ENCODE measurements at regions of chr14 and their contacts with region 1.

Region 1: DNA sequence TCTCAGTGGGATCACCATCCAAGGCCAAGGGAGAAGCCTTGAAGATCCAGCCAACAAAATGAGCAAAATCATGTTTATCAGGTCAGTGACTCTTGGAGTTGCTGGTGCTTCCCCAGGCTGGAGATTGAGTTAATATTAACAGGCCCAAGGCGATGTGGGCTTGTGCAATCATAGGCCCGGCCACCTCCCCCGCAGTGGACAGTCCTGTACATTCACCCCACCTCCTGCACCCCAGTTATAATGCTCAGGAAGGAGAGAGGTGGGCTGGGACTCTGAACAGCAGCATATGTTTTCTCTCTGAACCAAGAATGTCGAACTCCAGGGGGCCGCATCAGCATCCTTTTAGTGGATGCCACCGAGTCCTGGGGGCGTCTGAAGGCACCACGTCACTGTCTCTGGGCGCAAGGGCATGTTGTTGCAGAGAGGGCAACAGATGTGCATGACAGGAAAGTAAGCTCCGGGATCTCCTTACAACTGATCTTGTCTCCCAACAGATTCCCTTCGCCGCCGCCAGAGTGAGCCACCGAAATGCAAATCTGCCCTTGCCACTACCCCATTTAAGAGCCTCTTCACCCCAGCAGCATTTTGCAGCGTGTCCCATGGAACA is 32.2 kb upstream of the SERPINA6 start:
- DNase-seq: no peak
- H3K4me3 ChIP-seq: no peak overlapping the region
- CTCF ChIP-seq: peak; percentile 57

Region 2: GRCh38 chr14:94334841-94335240 is 20.5 kb before region 1 on chr14:
- CTCF ChIA-PET with region 1: no interaction called
- POLR2A ChIA-PET with region 1: no interaction called
- DNase-seq: no peak
- H3K4me3 ChIP-seq: no peak overlapping the region
- CTCF ChIP-seq: no peak

Region 3: DNA sequence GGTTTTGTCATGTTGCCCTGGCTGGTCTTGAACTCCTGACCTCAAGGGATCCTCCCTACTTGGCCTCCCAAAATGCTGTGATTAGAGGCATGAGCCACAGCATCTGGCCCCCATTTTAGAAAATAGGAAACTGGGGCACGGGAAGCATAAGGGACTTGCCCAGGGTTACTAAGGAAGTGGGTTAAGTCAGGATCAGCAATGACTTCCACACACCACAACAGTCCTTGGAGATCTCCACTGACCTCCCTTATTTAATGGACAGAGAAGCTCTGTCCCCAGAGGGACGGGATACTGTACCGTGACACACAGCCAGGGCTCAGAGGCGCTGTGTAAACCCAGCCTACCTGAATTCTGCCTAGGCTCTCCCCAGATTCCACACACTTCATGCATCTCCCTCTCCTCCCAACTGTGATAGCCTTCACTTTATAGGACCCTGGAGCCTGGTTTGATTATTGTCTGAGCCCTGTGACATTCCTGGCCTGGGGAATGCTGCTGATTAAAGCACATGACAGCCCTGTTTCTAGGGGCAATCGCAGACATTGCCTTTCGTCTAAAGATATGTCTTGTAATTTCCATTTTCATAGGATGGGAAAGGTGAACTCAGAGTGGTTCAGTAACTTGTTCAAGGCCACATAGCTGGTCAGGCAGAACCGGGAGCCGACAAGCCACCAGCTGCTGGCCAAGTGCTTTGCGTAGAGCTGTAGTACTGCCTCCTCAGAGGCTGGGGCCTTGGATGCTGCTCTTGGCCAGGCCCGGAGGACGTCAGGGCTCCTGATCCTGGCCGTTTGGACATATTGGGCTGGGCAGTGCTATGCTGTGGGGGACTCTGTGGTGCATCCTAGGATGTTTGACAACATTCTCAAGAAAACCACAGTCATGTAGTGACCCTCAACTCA is 12.3 kb after region 1 on chr14:
- CTCF ChIA-PET with region 1: interaction called, 18 read pairs
- POLR2A ChIA-PET with region 1: no interaction called
- DNase-seq: no peak
- H3K4me3 ChIP-seq: no peak overlapping the region
- CTCF ChIP-seq: no peak

Region 4: GRCh38 chr14:94412671-94413638 is 57.7 kb after region 1 on chr14:
- CTCF ChIA-PET with region 1: interaction called, 19 read pairs
- POLR2A ChIA-PET with region 1: no interaction called
- DNase-seq: no peak
- H3K4me3 ChIP-seq: no peak overlapping the region
- CTCF ChIP-seq: peak; percentile 23